ENCODE measurements at regions of chr18 and their contacts with region 1.

Region 1: GRCh38 chr18:3281456-3282400 is 19.8 kb downstream of the MYL12B start:
- DNase-seq: no peak
- ATAC-seq: peak; percentile 84 to 85
- H3K4me3 ChIP-seq: no peak overlapping the region
- H3K27ac ChIP-seq: no peak overlapping the region
- H3K4me1 ChIP-seq: peaks cover 2% of the 10 kb centered on the region
- H3K27me3 ChIP-seq: no peaks in the 10 kb centered on the region

Region 2: GRCh38 chr18:3340015-3340681 is 58.4 kb after region 1 on chr18:
- intact Hi-C with region 1: no loop called
- DNase-seq: no peak
- ATAC-seq: no peak
- H3K4me3 ChIP-seq: no peak overlapping the region
- H3K27ac ChIP-seq: no peak overlapping the region
- H3K4me1 ChIP-seq: no peaks in the 10 kb centered on the region
- H3K27me3 ChIP-seq: no peaks in the 10 kb centered on the region

Region 3: DNA sequence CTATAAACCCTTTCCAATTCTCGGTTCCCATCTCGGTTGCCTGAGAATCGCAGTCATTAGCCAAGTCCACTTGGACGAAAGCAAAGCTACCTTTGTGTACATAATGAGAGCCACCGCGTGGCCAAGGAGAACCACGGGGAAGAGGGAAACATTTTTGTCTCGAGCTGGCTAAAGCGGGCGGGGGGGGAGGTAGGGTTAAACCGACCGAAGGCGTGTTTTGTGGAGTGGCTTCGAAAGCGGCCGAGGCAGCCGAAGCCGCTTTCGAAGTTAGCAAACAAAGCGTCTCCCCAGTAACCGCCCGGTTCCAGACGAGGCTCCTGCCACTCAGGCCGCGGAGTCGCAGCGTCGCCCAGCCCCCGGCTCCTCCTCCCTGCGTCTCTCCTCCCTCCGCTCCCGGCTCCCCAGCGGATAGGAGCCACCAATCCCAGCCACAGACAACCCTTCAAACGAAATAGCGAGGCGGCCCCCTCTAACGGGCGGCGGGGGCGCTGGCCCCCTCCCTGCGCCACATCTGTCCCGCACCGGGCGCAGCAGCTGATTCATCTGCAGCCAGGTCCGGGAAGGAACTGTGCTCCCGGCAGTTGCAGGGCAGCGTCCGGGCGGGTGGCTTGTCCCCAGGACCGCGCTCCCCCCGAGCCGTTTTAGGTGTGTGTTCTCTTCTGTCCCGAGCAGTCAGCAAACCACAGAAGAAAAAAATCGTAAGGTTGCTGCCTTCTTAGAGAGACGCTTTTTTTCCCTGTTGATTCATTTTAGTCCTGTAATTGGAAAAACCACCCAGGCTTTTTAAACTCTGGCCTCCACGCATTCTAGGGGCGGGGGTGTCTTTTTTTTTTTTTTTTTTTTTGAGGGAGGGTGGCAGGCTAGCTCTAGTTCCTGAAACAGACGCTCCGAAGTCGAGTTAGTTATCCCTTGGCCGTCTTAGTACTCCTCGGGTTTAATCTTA is 166.4 kb after region 1 on chr18:
- intact Hi-C with region 1: loop called (anchors 5 to 10 kb)
- DNase-seq: peak; percentile 96 to 97 (median 97)
- ATAC-seq: peak; percentile 89 to 92
- H3K4me3 ChIP-seq: peak overlapping the region; percentile 92
- H3K27ac ChIP-seq: peak overlapping the region; percentile 97
- H3K4me1 ChIP-seq: peaks cover 3% of the 10 kb centered on the region
- H3K27me3 ChIP-seq: no peaks in the 10 kb centered on the region

Region 4: DNA sequence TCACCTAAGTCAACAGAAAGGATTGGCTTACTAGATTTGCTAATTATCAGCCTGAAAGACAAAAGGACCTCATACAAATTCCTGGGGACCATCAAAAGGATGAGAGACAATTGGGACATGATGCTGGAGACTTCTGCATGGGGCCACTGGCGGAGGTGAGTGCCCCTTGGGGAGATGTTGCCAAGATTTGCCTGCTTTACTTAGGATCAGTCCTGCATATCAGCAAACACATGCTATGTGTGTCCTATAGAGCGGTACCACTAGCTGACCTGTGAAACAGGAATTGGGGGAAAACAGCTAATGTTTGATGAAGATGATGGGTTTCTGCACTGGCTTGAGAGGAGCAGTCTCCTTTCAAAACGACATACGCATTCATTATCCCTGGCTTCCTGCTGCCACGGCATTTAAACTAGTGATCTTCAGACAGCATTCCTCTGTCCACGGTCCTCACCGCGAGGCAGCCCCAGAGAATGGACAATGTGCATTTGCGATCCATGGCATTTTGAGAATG is 272.4 kb after region 1 on chr18:
- intact Hi-C with region 1: no loop called
- DNase-seq: no peak
- ATAC-seq: no peak
- H3K4me3 ChIP-seq: no peak overlapping the region
- H3K27ac ChIP-seq: no peak overlapping the region
- H3K4me1 ChIP-seq: no peaks in the 10 kb centered on the region
- H3K27me3 ChIP-seq: no peaks in the 10 kb centered on the region

Region 5: DNA sequence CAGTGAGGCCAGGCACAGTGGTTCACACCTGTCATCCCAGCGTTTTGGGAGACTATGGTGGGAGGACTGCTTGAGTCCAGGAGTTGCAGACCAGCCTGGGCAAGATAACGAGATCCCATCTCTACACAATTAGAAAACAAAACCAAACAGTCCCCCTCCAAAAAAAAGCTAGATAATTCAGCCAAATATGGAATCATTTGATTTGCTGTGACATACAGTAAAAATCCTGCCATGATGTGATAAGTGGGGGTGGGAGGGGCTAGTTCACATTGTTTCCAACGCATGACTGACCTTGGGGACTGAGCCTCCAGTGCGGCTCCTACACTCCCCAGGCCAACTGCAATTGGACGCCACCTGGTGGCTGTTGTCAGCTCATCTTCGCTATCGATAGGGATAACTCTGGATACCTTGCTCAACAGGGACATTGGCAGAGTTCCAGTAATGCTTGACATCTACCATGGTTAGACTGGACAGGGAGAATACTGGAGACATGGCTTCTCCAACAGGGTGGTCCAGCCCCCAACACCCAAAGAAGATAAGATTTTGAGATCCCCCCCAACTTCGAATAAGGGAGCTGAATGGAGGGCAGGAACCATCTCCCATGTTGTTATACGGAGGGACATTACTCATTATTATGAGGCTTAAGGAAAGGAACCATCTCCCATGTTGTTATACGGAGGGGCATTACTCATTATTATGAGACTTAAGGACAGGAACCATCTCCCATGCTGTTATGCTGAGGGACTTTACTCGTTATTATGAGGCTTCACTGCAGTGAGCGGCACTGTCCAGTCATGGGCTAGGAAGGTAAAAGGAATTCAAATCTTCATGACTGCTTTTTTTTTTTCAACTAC is 304.2 kb after region 1 on chr18:
- intact Hi-C with region 1: loop called in 2 of 4 experiments (anchors 10 kb)
- DNase-seq: peak; percentile 79 to 90 (median 83)
- ATAC-seq: peak; percentile 92 to 94
- H3K4me3 ChIP-seq: no peak overlapping the region
- H3K27ac ChIP-seq: no peak overlapping the region
- H3K4me1 ChIP-seq: no peaks in the 10 kb centered on the region
- H3K27me3 ChIP-seq: no peaks in the 10 kb centered on the region

Region 6: DNA sequence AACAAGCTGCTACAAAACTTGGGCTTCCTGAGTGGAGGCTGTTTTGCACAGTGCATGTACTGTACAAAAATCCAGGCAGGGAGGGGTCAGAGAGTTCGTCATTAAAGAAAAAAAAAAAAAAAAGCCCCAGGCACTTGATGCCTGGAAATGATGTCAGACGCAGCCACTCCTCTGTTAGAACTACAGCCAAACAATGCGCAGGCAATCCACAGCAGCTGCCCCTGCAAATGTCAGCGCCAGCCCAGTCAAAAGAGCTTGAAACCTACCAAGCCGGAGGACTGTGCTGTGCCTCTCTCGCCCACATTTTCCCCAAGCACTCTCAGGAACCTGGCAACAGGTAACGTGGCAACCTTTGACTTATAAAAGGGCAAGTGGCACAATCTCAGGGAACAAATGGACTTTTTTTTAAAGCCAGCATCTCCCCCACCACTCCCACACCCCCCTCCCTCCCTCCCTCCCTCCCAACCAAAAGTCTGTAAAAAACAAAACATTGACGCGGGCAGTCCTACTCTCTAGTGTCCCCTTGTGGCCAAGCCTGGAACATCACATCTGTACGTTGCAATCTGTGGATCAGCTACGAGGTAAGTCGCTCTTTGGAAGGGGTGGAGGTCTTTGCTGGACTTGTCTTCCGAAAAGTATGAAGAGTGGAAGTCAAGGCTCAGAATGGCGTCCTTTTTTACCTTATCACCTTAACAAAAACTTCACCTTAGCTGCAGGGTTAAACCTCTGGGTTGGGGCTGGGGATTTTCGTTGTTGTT is 312.4 kb after region 1 on chr18:
- intact Hi-C with region 1: loop called in 3 of 4 experiments (anchors 5 to 10 kb)
- DNase-seq: peak; percentile 88 to 93 (median 88)
- ATAC-seq: peak; percentile 87
- H3K4me3 ChIP-seq: peak overlapping the region; percentile 49
- H3K27ac ChIP-seq: peak overlapping the region; percentile 99
- H3K4me1 ChIP-seq: peaks cover 16% of the 10 kb centered on the region
- H3K27me3 ChIP-seq: no peaks in the 10 kb centered on the region

Region 7: GRCh38 chr18:3665780-3666525 is 384.2 kb after region 1 on chr18:
- intact Hi-C with region 1: loop called (anchors 1 to 5 kb)
- DNase-seq: peak; percentile 74 to 88 (median 85)
- ATAC-seq: peak; percentile 91 to 93
- H3K4me3 ChIP-seq: no peak overlapping the region
- H3K27ac ChIP-seq: peak overlapping the region; percentile 22
- H3K4me1 ChIP-seq: no peaks in the 10 kb centered on the region
- H3K27me3 ChIP-seq: no peaks in the 10 kb centered on the region